ENCODE measurements at regions of chr1 and their contacts with region 1.

Region 1: GRCh38 chr1:85259118-85259911 is at the start of gene C1orf52:
- DNase-seq: peak; percentile 99
- ATAC-seq: peak; percentile 97
- H3K4me3 Mint-ChIP-seq: peak within 1 kb of the TSS; percentile 95
- H3K27ac Mint-ChIP-seq: peak within 1 kb of the TSS; percentile 94
- H3K4me1 Mint-ChIP-seq: peaks cover 39% of the 10 kb centered on the region
- H3K27me3 Mint-ChIP-seq: no peaks in the 10 kb centered on the region
- total RNA-seq, gene C1orf52: 23.5 to 24.6 TPM

Region 2: GRCh38 chr1:84573967-84574842 is 685.1 kb before region 1 on chr1 and contains the start of gene CTBS:
- CTCF ChIA-PET with region 1: interaction called, 5 read pairs
- POLR2A ChIA-PET with region 1: no interaction called
- intact Hi-C with region 1: loop called in 1 of 2 experiments (anchors 1 kb)
- DNase-seq: peak; percentile 94
- ATAC-seq: peak; percentile 85
- H3K4me3 Mint-ChIP-seq: peak within 1 kb of the TSS; percentile 97
- H3K27ac Mint-ChIP-seq: peak within 1 kb of the TSS; percentile 99
- H3K4me1 Mint-ChIP-seq: peaks cover 45% of the 10 kb centered on the region
- H3K27me3 Mint-ChIP-seq: no peaks in the 10 kb centered on the region
- total RNA-seq, gene CTBS: 13.5 to 17.3 TPM

Region 3: GRCh38 chr1:84959294-84959693 is 300.0 kb before region 1 on chr1:
- CTCF ChIA-PET with region 1: interaction called, 15 read pairs
- POLR2A ChIA-PET with region 1: no interaction called
- intact Hi-C with region 1: no loop called
- DNase-seq: peak; percentile 77
- ATAC-seq: peak; percentile 97
- H3K4me3 Mint-ChIP-seq: peak overlapping the region; percentile 7
- H3K27ac Mint-ChIP-seq: peak overlapping the region; percentile 87
- H3K4me1 Mint-ChIP-seq: peaks cover 33% of the 10 kb centered on the region
- H3K27me3 Mint-ChIP-seq: peaks cover 2% of the 10 kb centered on the region

Region 4: GRCh38 chr1:85061711-85062424 is 197.4 kb before region 1 on chr1:
- CTCF ChIA-PET with region 1: interaction called, 5 read pairs
- POLR2A ChIA-PET with region 1: interaction called, 4 read pairs
- intact Hi-C with region 1: loop called in 1 of 2 experiments (anchors 5 kb)
- DNase-seq: peak; percentile 91
- ATAC-seq: peak; percentile 100
- H3K4me3 Mint-ChIP-seq: peak overlapping the region; percentile 74
- H3K27ac Mint-ChIP-seq: peak overlapping the region; percentile 66
- H3K4me1 Mint-ChIP-seq: peaks cover 13% of the 10 kb centered on the region
- H3K27me3 Mint-ChIP-seq: peaks cover 12% of the 10 kb centered on the region

Region 5: DNA sequence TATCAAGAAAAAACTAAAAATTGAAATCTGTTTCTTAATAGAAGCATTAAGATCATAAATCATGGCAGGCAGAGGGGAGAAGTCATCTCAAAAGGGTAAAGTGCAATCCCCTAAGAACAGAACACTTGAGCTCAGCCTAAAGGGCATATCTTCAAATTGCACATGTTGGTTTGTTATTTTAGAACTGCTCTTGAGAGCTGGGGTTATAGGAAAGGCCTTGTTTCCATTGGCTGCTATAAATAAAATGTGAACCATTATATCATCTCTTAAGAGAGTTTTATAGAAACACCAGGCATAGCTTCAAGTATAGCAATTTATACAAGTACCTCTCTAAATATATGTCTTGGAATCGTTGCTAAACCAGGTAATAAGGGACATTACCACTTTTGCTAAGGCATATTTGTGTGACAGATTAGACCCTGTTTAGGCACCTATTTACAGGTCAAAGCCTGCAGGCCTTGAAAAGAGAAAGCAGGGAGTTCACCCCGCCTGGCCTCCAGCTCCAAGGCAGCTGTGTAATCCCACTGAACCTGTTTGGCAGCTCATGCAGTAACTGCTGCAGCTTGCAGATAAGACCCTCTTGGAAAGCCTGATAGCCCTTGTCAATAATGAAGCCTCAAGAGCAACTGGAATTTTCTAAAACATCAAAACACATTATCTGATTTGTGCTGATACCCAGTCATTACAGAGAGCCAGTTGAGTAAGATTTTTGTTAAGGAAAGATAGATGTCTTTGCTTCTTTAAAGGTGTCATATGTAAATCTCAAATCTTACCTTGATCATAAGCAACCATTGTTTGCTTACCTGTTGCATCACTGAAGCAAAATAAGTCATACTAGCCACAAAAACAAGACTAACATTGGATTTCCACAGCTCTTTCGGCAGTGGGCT is 34.3 kb before region 1 on chr1:
- CTCF ChIA-PET with region 1: interaction called, 10 read pairs
- POLR2A ChIA-PET with region 1: no interaction called
- intact Hi-C with region 1: no loop called
- DNase-seq: no peak
- ATAC-seq: no peak
- H3K4me3 Mint-ChIP-seq: no peak overlapping the region
- H3K27ac Mint-ChIP-seq: no peak overlapping the region
- H3K4me1 Mint-ChIP-seq: no peaks in the 10 kb centered on the region
- H3K27me3 Mint-ChIP-seq: peaks cover 2% of the 10 kb centered on the region

Region 6: DNA sequence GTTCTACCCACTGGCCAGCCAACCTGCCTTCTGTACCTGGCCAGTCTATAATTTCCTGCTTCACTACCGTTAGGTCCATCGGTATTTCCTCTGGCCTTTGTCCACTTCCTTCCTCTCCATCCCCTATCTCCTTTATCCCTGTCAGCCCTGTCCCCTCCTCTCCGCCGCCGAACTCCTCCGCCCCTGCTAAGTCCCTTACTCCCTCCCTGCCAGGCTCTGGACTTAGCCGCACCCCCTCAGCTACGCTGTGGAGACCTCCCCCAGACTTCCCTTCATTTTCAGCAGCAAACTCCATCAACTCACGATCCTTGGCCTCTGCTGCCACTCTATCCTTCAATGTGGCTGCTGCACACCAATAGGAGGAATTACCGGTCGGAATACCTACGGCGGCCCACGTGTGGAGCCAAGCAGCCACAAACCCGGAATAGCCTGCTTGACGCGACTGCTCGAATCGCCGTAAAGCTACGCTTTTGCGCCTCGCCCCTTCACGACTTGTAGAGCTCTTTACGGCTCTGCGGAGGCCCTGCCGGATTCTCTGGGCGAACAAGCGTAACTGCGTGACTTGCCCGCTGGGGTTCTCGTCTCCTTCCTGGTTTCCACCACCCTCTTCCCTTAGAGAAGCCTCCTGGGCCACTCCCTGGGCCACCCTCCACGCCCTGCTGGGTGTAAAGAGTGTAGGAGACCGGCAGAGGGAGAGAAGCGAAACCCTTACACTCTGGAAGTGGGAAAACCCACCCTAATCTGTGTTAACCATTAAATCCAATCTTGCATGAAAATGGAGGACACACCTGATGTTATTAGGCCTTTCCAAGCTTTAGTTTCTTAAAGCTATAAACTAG is 448.9 kb after region 1 on chr1 and contains the start of gene ZNHIT6:
- CTCF ChIA-PET with region 1: no interaction called
- POLR2A ChIA-PET with region 1: interaction called, 3 read pairs
- intact Hi-C with region 1: loop called in 1 of 2 experiments (anchors 5 kb)
- DNase-seq: peak; percentile 93
- ATAC-seq: peak; percentile 96
- H3K4me3 Mint-ChIP-seq: no peak within 1 kb of the TSS
- H3K27ac Mint-ChIP-seq: no peak within 1 kb of the TSS
- H3K4me1 Mint-ChIP-seq: peaks cover 26% of the 10 kb centered on the region
- H3K27me3 Mint-ChIP-seq: no peaks in the 10 kb centered on the region
- total RNA-seq, gene ZNHIT6: 20.7 to 23.8 TPM

Measured in activated CD4-positive, alpha-beta T cell treated with anti-CD3 and anti-CD28 coated beads for 36 hours (primary cell).